IMR-90 (cell line): ENCODE measurements at regions of chr11 and their contacts with region 1.

Region 1: DNA sequence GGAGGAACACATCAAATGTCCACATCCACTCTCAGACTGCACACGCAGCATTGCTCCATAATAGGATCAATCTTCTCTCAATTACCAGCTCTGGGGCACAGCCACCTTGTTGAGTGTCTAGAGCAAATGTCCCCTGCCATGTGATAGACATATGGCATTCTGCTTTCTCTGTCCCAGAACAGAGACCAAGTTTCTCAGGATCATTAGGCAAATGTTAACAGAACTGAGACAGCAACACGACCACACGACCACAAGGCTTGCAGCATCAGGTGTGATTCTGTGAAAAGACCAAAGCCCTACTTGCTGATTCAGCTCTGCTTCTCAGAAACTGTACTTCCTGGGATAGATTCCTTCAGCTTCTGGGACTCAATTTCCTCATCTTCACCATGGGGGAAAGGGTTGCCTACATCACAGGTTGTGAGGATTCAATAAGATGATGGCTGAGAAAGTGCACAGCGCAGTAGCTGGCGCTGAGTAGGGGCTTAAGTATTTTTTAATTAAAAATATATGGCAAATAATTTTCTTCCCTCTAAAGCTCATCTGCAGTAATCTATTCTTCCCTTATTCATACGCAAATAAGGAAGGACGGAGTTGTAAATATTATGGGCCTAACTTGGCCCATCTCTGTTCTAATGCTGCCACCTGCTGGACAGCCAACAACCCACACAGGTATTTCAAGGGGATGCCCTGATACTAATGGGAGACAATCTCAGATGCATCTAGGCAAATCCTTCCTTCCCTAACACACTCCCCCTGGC is 54.3 kb upstream of the USP47 start:
- DNase-seq: peak; percentile 70
- ATAC-seq: peak; percentile 96
- H3K4me3 ChIP-seq: no peak overlapping the region
- H3K27ac ChIP-seq: no peak overlapping the region
- H3K4me1 ChIP-seq: no peaks in the 10 kb centered on the region
- H3K27me3 ChIP-seq: peaks cover 13% of the 10 kb centered on the region
- CTCF ChIP-seq: peak; percentile 94
- POLR2A ChIP-seq: no peak
- RAD21 ChIP-seq: peak; percentile 95

Region 2: GRCh38 chr11:10792398-10792975 is 995.0 kb before region 1 on chr11:
- CTCF ChIA-PET with region 1: interaction called, 5 read pairs
- POLR2A ChIA-PET with region 1: no interaction called
- dilution Hi-C with region 1: no loop called
- in situ Hi-C with region 1: loop called (anchors 5 kb)
- intact Hi-C with region 1: loop called (anchors 1 kb)
- DNase-seq: peak; percentile 62
- ATAC-seq: peak; percentile 94
- H3K4me3 ChIP-seq: no peak overlapping the region
- H3K27ac ChIP-seq: no peak overlapping the region
- H3K4me1 ChIP-seq: no peaks in the 10 kb centered on the region
- H3K27me3 ChIP-seq: no peaks in the 10 kb centered on the region
- CTCF ChIP-seq: peak; percentile 93
- POLR2A ChIP-seq: no peak
- RAD21 ChIP-seq: peak; percentile 92

Region 3: GRCh38 chr11:11028017-11028692 is 759.3 kb before region 1 on chr11:
- CTCF ChIA-PET with region 1: interaction called, 11 read pairs
- POLR2A ChIA-PET with region 1: no interaction called
- dilution Hi-C with region 1: no loop called
- in situ Hi-C with region 1: loop called (anchors 5 kb)
- intact Hi-C with region 1: loop called (anchors 1 kb)
- DNase-seq: peak; percentile 44
- ATAC-seq: peak; percentile 85
- H3K4me3 ChIP-seq: no peak overlapping the region
- H3K27ac ChIP-seq: no peak overlapping the region
- H3K4me1 ChIP-seq: peaks cover 3% of the 10 kb centered on the region; the same call in 1 of the 2 replicates
- H3K27me3 ChIP-seq: peaks cover 10% of the 10 kb centered on the region
- CTCF ChIP-seq: peak; percentile 72
- POLR2A ChIP-seq: no peak
- RAD21 ChIP-seq: peak; percentile 74

Region 4: GRCh38 chr11:11157185-11157584 is 630.3 kb before region 1 on chr11:
- CTCF ChIA-PET with region 1: no interaction called
- POLR2A ChIA-PET with region 1: no interaction called
- dilution Hi-C with region 1: no loop called
- in situ Hi-C with region 1: no loop called
- intact Hi-C with region 1: loop called (anchors 5 kb)
- DNase-seq: peak; percentile 8
- ATAC-seq: peak; percentile 42; the same call in 1 of the 2 replicates
- H3K4me3 ChIP-seq: no peak overlapping the region
- H3K27ac ChIP-seq: no peak overlapping the region
- H3K4me1 ChIP-seq: no peaks in the 10 kb centered on the region
- H3K27me3 ChIP-seq: peaks cover 49% of the 10 kb centered on the region
- CTCF ChIP-seq: peak; percentile 38
- POLR2A ChIP-seq: no peak
- RAD21 ChIP-seq: peak; percentile 44

Region 5: DNA sequence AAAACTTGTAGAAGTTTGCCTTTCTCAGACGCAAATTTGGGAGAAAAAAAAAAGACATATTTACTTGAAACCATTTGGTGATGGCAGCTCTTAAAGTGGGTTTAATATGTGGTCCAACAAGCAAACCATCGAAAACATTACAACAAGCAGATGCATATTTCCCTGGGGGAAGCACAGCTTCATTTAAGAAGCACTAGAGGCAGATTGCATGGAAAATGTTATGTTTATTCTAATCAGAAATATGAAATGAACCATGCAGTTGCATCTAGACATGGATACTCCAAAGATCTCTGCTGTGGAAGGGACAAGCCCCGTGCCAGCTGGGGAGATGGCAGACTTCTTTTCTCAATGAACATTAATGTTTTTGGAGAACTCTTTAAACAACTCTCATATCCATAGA is 532.5 kb after region 1 on chr11:
- CTCF ChIA-PET with region 1: no interaction called
- POLR2A ChIA-PET with region 1: no interaction called
- dilution Hi-C with region 1: no loop called
- in situ Hi-C with region 1: no loop called
- intact Hi-C with region 1: no loop called
- DNase-seq: no peak
- ATAC-seq: no peak
- H3K4me3 ChIP-seq: no peak overlapping the region
- H3K27ac ChIP-seq: peak overlapping the region; percentile 96; the same call in 1 of the 2 replicates
- H3K4me1 ChIP-seq: peaks cover 23% of the 10 kb centered on the region
- H3K27me3 ChIP-seq: no peaks in the 10 kb centered on the region
- CTCF ChIP-seq: no peak
- POLR2A ChIP-seq: no peak
- RAD21 ChIP-seq: no peak